ENCODE measurements at regions of chr2 and their contacts with region 1.

Region 1: DNA sequence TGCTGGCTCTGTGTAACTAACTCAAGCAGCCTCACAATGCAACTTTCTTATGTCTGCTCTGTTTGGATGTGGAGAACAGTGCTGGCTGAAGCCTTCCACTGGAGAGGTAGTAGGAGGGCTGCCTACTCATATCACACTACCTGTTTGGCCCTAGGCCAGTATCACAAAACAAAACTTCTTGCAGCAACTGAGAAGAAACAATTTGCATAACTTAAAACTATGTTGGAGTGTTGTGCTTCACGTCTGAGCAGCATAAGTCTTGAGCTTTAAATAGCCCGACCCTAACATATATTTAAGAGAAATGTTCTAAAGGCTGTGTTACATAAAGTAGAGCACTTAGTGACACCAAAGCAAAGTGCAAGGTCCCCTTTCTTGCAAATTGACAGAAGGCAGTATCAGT is 204.9 kb upstream of the ACVR2A start:
- DNase-seq: no peak
- H3K4me3 Mint-ChIP-seq: no peak overlapping the region
- H3K27ac Mint-ChIP-seq: no peak overlapping the region
- H3K4me1 Mint-ChIP-seq: peaks cover 10% of the 10 kb centered on the region
- H3K27me3 Mint-ChIP-seq: no peaks in the 10 kb centered on the region
- CTCF ChIP-seq: no peak

Region 2: GRCh38 chr2:147082850-147083522 is 556.9 kb before region 1 on chr2:
- CTCF ChIA-PET with region 1: no interaction called
- intact Hi-C with region 1: loop called (anchors 10 kb)
- DNase-seq: peak; percentile 68
- H3K4me3 Mint-ChIP-seq: no peak overlapping the region
- H3K27ac Mint-ChIP-seq: no peak overlapping the region
- H3K4me1 Mint-ChIP-seq: peaks cover 16% of the 10 kb centered on the region
- H3K27me3 Mint-ChIP-seq: no peaks in the 10 kb centered on the region
- CTCF ChIP-seq: peak; percentile 76

Region 3: GRCh38 chr2:147577323-147577997 is 62.4 kb before region 1 on chr2:
- CTCF ChIA-PET with region 1: no interaction called
- intact Hi-C with region 1: no loop called
- DNase-seq: no peak
- H3K4me3 Mint-ChIP-seq: no peak overlapping the region
- H3K27ac Mint-ChIP-seq: no peak overlapping the region
- H3K4me1 Mint-ChIP-seq: no peaks in the 10 kb centered on the region
- H3K27me3 Mint-ChIP-seq: no peaks in the 10 kb centered on the region
- CTCF ChIP-seq: no peak

Region 4: DNA sequence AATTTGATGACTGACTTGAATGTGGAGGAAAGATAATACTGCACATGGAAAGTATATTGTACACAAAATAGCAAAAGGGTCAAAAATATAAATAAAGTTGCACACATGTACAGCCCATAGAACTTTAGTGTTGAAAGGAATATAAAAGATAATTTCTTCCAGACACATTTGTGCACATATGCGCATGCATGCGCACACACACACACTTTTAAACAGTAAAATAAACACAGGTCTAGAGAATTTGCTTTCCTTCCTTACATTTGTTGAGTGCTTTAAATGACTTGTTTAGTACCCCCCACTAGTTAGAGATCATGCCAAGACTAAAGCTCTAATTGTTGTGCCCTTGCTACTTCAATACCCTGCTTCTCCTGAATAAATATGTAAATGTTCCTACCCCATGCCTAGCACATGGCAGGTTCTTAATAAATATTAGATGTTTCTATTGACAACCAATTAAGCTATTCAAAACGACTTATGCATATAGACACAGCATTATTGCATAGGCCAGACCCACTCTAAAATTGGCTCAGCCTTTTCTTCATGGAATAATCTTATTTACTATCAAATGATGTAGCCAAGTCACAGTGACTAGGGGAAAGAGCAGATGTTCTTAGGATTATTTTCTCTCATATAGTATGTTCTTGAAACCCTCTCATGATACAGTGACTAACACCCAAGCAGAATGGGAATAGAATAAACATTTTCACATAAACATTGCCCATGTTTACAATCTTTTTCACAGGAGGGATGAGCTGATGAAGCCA is 39.5 kb after region 1 on chr2:
- CTCF ChIA-PET with region 1: no interaction called
- intact Hi-C with region 1: no loop called
- DNase-seq: no peak
- H3K4me3 Mint-ChIP-seq: no peak overlapping the region
- H3K27ac Mint-ChIP-seq: no peak overlapping the region
- H3K4me1 Mint-ChIP-seq: no peaks in the 10 kb centered on the region
- H3K27me3 Mint-ChIP-seq: no peaks in the 10 kb centered on the region
- CTCF ChIP-seq: no peak

Measured in Calu3 (cell line).